ENCODE measurements at regions of chr11 and their contacts with region 1.

Region 1: GRCh38 chr11:26276798-26277424 is 55.0 kb upstream of the ANO3 start:
- DNase-seq: peak; percentile 35
- H3K4me3 ChIP-seq: no peak overlapping the region
- H3K27ac ChIP-seq: no peak overlapping the region
- H3K4me1 ChIP-seq: no peaks in the 10 kb centered on the region
- H3K27me3 ChIP-seq: no peaks in the 10 kb centered on the region
- CTCF ChIP-seq: peak; percentile 96 to 97

Region 2: GRCh38 chr11:25970726-25971508 is 306.0 kb before region 1 on chr11:
- CTCF ChIA-PET with region 1: no interaction called
- dilution Hi-C with region 1: no loop called
- in situ Hi-C with region 1: loop called in 1 of 2 experiments (anchors 10 kb)
- intact Hi-C with region 1: no loop called
- DNase-seq: peak; percentile 74
- H3K4me3 ChIP-seq: no peak overlapping the region
- H3K27ac ChIP-seq: no peak overlapping the region
- H3K4me1 ChIP-seq: peaks cover 7% of the 10 kb centered on the region
- H3K27me3 ChIP-seq: no peaks in the 10 kb centered on the region
- CTCF ChIP-seq: peak; percentile 41 to 45

Region 3: DNA sequence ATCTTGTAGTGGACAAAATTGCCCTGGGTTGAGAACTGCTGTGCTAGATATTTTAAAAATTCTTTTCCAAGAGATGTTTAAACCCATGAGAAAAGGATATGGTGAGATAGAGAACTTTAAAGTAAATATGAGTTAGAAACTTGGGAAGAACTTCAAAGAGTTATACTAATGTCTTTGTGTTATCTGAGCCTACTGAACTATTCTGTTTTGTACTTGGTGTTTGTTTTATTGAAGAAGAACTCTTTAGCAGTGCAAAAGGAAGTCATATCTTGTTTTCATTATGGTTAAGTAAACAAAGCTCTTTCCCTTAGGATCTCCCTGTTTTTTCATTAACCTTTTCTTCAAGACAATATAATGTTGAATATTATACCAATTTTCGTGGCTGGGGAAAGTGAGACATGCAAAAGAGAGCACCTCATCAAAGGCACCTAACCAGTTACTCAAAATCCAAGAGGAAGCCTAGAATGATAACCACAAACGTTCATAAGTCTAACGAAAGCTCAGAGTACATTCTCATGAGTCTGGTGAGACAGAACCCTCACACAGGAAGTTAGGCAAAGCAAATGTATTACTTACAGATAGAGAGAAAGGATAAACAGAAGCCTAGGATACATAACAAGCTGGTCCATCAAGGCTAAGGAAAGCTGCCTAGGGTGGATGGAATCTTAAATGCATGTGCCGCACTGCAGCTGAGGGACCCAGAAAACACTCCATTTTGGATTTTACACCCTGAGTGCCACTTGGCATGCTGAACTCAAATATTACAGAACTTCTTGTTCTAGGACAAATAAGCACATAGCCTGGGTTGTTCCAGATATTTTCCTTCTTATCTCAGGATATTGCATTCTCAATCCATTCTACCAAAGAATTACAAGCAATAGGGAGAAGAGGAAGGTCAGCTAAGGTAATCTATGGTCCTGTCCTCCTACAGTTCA is 57.5 kb before region 1 on chr11:
- CTCF ChIA-PET with region 1: no interaction called
- dilution Hi-C with region 1: no loop called
- in situ Hi-C with region 1: no loop called
- intact Hi-C with region 1: no loop called
- DNase-seq: no peak
- H3K4me3 ChIP-seq: no peak overlapping the region
- H3K27ac ChIP-seq: no peak overlapping the region
- H3K4me1 ChIP-seq: no peaks in the 10 kb centered on the region
- H3K27me3 ChIP-seq: no peaks in the 10 kb centered on the region
- CTCF ChIP-seq: no peak

Measured in mammary epithelial cell (primary cell).